ENCODE measurements at regions of chr9 and their contacts with region 1.

Region 1: DNA sequence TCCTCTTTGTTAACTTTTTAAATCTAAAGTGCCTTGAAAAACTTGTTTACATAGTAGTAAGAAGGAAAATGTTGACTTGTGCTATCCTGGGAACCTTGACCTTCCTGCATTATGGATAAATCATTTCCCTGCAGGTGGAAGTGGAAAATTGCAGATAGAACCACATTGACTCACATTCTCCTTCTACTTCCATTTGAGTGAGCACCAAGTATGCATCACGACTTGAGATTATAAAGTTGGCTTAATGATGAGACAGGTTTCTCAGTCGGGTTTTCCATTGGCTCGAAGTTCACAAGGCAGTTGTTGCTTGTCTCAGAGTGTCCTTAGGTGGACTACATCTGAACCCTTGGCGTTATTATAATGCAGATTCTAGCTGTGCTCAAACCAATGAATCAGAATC is 39.9 kb downstream of the DOCK8 start:
- DNase-seq: no peak
- ATAC-seq: no peak
- H3K4me3 ChIP-seq: no peak overlapping the region
- H3K27ac ChIP-seq: no peak overlapping the region
- H3K4me1 ChIP-seq: no peaks in the 10 kb centered on the region
- H3K27me3 ChIP-seq: no peaks in the 10 kb centered on the region
- CTCF ChIP-seq: no peak
- EP300 ChIP-seq: no peak
- POLR2A ChIP-seq: no peak
- RAD21 ChIP-seq: no peak

Region 2: GRCh38 chr9:237858-238345 is 16.6 kb before region 1 on chr9:
- CTCF ChIA-PET with region 1: no interaction called
- POLR2A ChIA-PET with region 1: no interaction called
- in situ Hi-C with region 1: no loop called
- intact Hi-C with region 1: no loop called
- DNase-seq: no peak
- ATAC-seq: no peak
- H3K4me3 ChIP-seq: no peak overlapping the region
- H3K27ac ChIP-seq: no peak overlapping the region
- H3K4me1 ChIP-seq: no peaks in the 10 kb centered on the region
- H3K27me3 ChIP-seq: no peaks in the 10 kb centered on the region
- CTCF ChIP-seq: no peak
- EP300 ChIP-seq: no peak
- POLR2A ChIP-seq: no peak
- RAD21 ChIP-seq: no peak

Region 3: GRCh38 chr9:269081-269711 is 14.7 kb after region 1 on chr9:
- CTCF ChIA-PET with region 1: no interaction called
- POLR2A ChIA-PET with region 1: no interaction called
- in situ Hi-C with region 1: no loop called
- intact Hi-C with region 1: loop called (anchors 2 kb)
- DNase-seq: no peak
- ATAC-seq: no peak
- H3K4me3 ChIP-seq: no peak overlapping the region
- H3K27ac ChIP-seq: no peak overlapping the region
- H3K4me1 ChIP-seq: no peaks in the 10 kb centered on the region
- H3K27me3 ChIP-seq: no peaks in the 10 kb centered on the region
- CTCF ChIP-seq: no peak
- EP300 ChIP-seq: no peak
- POLR2A ChIP-seq: no peak
- RAD21 ChIP-seq: no peak

Region 4: GRCh38 chr9:279674-280073 is 25.2 kb after region 1 on chr9:
- CTCF ChIA-PET with region 1: no interaction called
- POLR2A ChIA-PET with region 1: no interaction called
- in situ Hi-C with region 1: no loop called
- intact Hi-C with region 1: loop called (anchors 1 kb)
- DNase-seq: no peak
- ATAC-seq: no peak
- H3K4me3 ChIP-seq: no peak overlapping the region
- H3K27ac ChIP-seq: no peak overlapping the region
- H3K4me1 ChIP-seq: no peaks in the 10 kb centered on the region
- H3K27me3 ChIP-seq: no peaks in the 10 kb centered on the region
- CTCF ChIP-seq: no peak
- EP300 ChIP-seq: no peak
- POLR2A ChIP-seq: no peak
- RAD21 ChIP-seq: no peak

Region 5: DNA sequence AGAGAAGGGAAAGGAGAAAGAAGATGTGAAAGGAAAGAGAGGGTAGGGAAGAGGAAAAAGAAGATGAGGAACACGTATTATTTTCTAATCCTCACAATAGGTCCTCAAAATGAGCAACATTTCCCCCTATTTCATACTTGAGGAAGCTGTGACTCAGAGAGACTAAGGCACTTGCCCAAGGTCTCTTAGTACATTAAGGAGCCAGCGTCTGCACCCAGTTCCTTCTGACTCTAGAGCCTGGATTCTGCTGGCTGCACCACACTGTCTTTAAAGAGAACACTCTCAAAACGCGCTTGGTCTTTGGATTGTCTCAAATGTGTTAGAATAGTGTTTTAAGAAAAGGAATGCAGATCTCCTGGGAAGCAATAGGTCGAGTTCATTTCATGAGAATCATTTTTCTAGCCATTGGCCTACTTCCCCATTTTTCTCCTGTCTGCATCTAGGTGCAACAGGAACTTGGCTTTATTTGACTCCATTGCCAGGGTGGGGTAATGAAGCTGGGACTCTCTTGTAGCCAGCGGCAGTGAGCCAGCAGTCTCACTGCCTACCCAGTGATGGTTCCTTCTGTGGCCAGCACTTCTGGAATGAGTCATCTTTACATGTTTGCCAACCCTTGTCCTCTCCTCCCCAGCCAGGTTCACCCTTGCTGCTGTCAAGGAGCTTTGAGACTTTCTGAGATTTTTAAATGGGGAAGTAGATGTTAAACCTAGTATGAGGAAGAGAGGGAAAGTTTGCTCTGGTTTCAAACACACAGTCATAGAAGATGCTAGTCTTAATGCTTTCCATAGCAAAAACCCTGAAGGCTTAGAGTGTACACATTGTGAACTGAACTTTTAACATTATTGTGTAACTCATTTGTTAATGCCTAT is 42.8 kb after region 1 on chr9:
- CTCF ChIA-PET with region 1: no interaction called
- POLR2A ChIA-PET with region 1: no interaction called
- in situ Hi-C with region 1: no loop called
- intact Hi-C with region 1: no loop called
- DNase-seq: no peak
- ATAC-seq: no peak
- H3K4me3 ChIP-seq: no peak overlapping the region
- H3K27ac ChIP-seq: no peak overlapping the region
- H3K4me1 ChIP-seq: no peaks in the 10 kb centered on the region
- H3K27me3 ChIP-seq: no peaks in the 10 kb centered on the region
- CTCF ChIP-seq: no peak
- EP300 ChIP-seq: no peak
- POLR2A ChIP-seq: no peak
- RAD21 ChIP-seq: no peak

Region 6: DNA sequence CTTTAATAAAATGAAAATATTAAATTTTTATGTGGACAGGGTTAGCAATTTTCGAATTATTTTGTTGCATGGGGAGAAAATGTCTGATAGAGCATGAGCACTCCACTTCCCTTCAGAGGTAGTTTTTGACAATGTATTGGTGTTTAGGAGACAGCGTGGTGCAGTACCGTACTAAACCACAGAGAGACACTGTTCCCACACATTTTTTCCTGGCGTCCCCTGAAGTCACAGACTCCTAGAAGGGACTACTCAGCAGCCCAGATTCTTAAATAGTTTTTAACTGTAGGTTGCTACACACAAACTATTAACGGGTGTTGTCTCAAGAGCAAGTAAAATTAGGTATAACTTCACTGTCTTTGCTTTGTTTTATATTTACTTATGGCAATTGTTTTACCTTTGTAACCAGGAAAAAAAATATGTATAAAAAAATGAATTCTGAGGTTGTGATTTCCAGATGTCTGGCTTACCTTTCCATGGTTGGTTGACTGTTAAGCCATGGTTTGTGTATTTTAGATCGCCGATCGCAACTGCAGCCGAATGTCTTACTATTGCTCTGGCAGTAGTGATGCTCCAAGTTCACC is 131.4 kb after region 1 on chr9:
- CTCF ChIA-PET with region 1: no interaction called
- POLR2A ChIA-PET with region 1: no interaction called
- in situ Hi-C with region 1: no loop called
- intact Hi-C with region 1: no loop called
- DNase-seq: peak; percentile 44
- ATAC-seq: peak; percentile 93
- H3K4me3 ChIP-seq: no peak overlapping the region
- H3K27ac ChIP-seq: no peak overlapping the region
- H3K4me1 ChIP-seq: no peaks in the 10 kb centered on the region
- H3K27me3 ChIP-seq: no peaks in the 10 kb centered on the region
- CTCF ChIP-seq: peak; percentile 83
- EP300 ChIP-seq: no peak
- POLR2A ChIP-seq: no peak
- RAD21 ChIP-seq: peak; percentile 59

Region 7: DNA sequence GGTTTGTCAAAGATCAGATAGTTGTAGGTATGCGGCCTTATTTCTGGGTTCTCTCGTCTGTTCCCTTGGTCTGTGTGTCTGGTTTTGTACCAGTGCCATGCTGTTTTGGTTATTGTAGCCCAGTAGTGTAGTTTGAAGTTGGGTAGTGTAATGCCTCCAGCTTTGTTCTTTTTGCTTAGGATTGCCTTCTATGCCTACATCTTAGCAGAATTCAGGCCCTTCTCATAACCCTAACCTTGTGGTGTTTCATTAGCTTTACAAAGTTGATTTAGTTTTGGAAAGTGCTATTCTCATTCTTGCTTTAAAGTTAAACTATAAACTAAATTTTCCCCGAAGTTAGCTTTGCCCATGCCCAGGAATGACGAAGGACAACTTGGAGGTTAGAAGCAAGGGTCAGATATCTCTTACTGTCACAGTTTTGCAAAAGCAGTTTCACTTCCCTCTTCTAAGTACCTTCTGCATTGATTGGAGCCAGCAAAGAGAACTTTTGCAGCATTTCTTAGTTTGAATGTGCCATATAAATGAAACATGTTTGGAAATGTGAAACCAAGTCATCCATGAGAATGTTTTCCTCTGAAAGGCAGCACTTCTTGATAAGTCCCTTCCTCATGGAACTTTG is 312.7 kb after region 1 on chr9:
- CTCF ChIA-PET with region 1: no interaction called
- POLR2A ChIA-PET with region 1: no interaction called
- in situ Hi-C with region 1: no loop called
- intact Hi-C with region 1: no loop called
- DNase-seq: no peak
- ATAC-seq: no peak
- H3K4me3 ChIP-seq: no peak overlapping the region
- H3K27ac ChIP-seq: no peak overlapping the region
- H3K4me1 ChIP-seq: peaks cover 7% of the 10 kb centered on the region
- H3K27me3 ChIP-seq: no peaks in the 10 kb centered on the region
- CTCF ChIP-seq: no peak
- EP300 ChIP-seq: no peak
- POLR2A ChIP-seq: no peak
- RAD21 ChIP-seq: no peak

Measured in HepG2 (cell line).